Prostate gland (tissue), 2 donors: ENCODE measurements at regions of chr2 and their contacts with region 1.

Region 1: DNA sequence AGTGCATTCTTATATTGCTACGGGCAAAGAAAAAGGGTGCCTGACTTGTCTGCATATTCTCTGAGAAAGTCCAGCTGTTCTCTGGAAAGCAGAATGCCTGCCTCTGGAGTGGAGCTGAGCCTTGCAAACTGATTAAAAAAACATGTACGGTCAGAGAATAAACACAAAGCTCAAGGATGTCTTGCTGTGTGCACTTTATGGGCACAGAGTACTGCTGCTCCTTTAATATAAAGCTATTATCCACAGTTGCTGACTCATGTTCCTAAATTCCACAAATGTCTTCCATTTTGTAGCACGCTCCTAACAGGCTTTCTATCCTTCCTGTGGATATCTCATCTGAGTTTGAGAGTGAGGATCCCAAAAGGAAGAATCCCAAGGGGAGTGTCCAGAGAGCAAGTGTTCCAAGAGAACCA is 229.0 kb downstream of the MREG start:
- DNase-seq: no peak
- H3K4me3 ChIP-seq: no peak overlapping the region
- H3K27ac ChIP-seq: no peak overlapping the region
- H3K4me1 ChIP-seq: no peaks in the 10 kb centered on the region
- H3K27me3 ChIP-seq: no peaks in the 10 kb centered on the region
- CTCF ChIP-seq: no peak
- POLR2A ChIP-seq: no peak

Region 2: DNA sequence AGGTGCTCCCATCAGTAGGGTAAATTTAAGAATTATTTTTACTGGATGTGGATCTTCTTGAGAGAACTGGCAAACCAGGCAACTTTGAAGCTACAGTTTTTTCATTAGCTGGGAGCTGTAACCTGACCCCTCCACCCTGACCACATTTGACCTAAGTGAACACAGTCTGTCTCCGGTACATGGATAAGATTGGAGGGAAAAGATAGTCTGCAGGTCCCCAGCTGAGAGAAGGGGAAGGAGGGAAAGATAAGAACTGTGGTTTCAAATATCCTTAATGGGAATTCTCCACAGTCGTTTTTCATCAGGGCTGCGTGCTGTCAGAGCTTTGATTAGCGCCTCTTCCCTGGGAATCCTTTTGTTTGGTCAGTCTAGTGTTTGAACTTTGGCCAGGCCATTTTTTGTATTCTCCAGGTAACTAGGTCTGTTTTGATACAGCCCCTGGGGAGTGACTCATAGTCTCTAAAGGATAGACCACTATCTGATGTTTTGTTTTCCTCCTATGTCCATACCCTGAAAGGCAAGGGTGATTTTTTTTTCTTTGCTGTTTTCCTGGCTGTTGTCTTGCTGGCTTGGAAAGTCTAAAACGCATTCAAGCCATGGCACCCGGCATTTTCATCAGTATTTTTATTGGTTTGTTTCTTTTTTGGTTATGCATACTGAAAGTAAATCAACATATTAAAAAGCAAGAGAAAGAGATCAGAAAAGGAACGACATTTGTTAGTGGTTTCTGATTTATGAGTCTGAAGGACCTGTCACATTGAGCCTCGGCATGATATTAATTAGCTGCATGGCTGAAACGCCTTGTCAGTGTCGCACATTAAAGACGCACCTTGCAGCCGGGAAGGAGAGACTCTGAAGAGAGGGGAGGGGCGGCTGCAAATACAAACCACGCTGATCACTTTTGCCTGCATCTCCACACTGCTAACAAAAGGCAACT is 165.1 kb before region 1 on chr2:
- intact Hi-C with region 1: loop called (anchors 10 kb)
- DNase-seq: no peak
- H3K4me3 ChIP-seq: no peak overlapping the region
- H3K27ac ChIP-seq: no peak overlapping the region
- H3K4me1 ChIP-seq: no peaks in the 10 kb centered on the region
- H3K27me3 ChIP-seq: no peaks in the 10 kb centered on the region
- CTCF ChIP-seq: no peak
- POLR2A ChIP-seq: no peak

Region 3: GRCh38 chr2:215680605-215681598 is 103.5 kb before region 1 on chr2:
- intact Hi-C with region 1: no loop called
- DNase-seq: no peak
- H3K4me3 ChIP-seq: no peak overlapping the region
- H3K27ac ChIP-seq: no peak overlapping the region
- H3K4me1 ChIP-seq: no peaks in the 10 kb centered on the region
- H3K27me3 ChIP-seq: no peaks in the 10 kb centered on the region
- CTCF ChIP-seq: no peak
- POLR2A ChIP-seq: no peak